Colonic mucosa (tissue), 4 donors: ENCODE measurements at regions of chr11 and their contacts with region 1.

Region 1: DNA sequence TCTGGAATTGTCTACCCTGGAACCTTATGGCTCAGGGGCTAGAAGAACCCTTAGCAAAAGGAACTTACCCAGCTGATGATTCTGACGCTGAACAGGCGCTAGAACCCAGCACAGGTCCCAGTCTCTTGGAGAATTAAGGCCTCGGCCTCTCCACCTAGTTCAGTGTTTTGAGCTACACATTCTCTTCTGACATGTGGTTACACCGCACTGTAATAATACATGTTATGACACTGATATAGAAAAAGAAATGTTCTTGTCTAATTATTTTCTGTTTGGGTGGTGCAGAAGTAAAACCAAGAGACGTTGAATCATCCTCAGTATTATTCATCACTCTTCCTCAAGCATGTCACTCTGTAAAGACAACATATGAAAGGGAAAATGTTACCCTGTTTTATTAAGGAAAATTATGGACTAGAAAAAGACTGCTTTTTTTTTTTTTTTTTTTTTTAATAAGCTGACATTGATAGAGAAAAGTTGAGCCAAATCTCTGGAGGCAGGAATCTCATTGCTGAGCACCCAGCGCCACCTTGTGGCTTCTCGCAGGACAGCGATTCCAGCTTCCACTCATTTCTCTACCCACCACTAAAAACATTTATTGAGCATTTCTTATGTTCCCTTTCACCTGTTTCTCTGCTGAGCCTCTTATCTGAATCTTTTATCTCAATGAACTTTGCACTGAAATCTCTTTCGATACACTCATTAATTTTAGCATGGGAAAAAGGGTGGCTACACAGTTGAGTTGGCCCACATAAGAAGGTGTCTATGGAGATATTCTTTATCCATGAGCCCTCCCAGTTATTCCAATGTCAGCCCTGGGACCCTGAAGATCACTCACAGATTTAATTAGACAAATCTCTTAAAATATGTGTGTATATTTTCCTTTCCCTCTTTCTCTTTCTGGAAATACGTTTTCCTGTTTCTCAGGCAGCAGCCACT is 12.6 kb upstream of the APLNR start:
- DNase-seq: peak; percentile 78
- H3K4me3 ChIP-seq: no peak overlapping the region
- H3K27ac ChIP-seq: no peak overlapping the region
- H3K4me1 ChIP-seq: peaks cover 4% of the 10 kb centered on the region
- H3K27me3 ChIP-seq: no peaks in the 10 kb centered on the region
- CTCF ChIP-seq: peak; percentile 86

Region 2: DNA sequence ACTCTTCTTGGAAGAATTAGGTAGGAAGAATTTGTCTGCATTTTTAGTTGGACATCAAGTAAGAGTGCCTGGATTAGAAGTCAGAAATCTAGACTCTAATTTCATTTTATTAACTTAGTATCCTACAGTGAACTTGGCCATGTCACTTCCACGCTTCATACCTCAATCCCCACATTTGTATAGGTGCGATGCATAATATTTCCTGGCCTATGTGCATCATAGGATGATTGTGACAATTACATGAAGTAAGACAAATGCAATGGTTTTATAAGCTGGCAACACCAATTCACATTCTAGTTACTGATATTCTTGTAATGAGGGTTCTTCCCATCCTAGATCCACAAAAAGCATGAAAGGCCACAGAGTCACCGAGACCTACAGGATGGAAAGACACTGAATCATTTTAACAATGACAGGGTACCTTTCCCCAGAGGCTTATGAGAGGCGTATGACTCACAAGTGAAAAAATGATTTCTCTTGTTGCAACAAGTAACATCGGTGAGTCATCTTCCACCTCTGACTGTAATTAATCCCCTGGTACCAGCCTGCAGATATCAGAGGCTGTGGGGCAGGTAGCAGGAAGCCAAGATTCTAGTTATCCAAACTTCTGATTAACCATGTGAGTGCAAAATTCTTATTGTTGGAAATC is 317.0 kb before region 1 on chr11:
- intact Hi-C with region 1: no loop called
- DNase-seq: no peak
- H3K4me3 ChIP-seq: no peak overlapping the region
- H3K27ac ChIP-seq: no peak overlapping the region
- H3K4me1 ChIP-seq: no peaks in the 10 kb centered on the region
- H3K27me3 ChIP-seq: no peaks in the 10 kb centered on the region
- CTCF ChIP-seq: no peak

Region 3: GRCh38 chr11:57116654-57117053 is 133.0 kb before region 1 on chr11:
- intact Hi-C with region 1: loop called (anchors 5 kb)
- DNase-seq: peak; percentile 41
- H3K4me3 ChIP-seq: no peak overlapping the region
- H3K27ac ChIP-seq: no peak overlapping the region
- H3K4me1 ChIP-seq: no peaks in the 10 kb centered on the region
- H3K27me3 ChIP-seq: no peaks in the 10 kb centered on the region
- CTCF ChIP-seq: peak; percentile 38

Region 4: DNA sequence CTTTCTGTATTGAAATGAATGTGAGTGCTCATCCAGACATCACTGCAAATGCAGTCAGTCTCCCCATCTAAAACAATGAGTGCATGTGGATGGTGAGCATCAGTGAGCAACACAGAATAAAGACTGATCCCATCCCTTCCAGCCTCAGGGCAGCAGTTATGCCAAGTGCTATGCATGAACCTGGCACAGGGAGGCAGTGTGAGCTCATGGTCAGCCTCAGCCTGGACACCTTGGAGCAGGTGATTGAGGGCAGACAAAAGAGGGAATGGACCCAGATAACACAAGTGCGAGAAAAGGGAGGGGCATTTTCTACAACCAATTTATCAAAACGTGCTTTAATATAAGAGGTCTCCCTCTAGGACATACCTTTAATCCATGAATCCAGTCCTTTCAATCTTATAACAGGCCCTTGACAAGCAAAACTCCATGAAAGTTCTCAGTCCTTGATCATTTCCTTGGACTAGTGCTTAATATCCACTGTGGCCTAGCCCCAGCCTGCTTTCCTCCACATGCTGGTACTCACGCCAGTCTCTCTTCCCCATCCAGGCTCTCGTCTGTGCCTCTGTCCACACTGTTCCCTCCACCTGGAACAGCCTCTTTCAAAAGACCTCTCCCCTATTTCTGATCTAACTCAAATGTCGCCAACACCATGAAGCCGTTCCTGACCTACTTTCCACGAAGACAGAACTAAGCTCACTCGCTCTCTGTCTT is 118.4 kb before region 1 on chr11:
- intact Hi-C with region 1: loop called (anchors 2 kb)
- DNase-seq: peak; percentile 32
- H3K4me3 ChIP-seq: no peak overlapping the region
- H3K27ac ChIP-seq: no peak overlapping the region
- H3K4me1 ChIP-seq: no peaks in the 10 kb centered on the region
- H3K27me3 ChIP-seq: no peaks in the 10 kb centered on the region
- CTCF ChIP-seq: peak; percentile 42

Region 5: GRCh38 chr11:57167125-57167846 is 82.4 kb before region 1 on chr11:
- intact Hi-C with region 1: no loop called
- DNase-seq: no peak
- H3K4me3 ChIP-seq: no peak overlapping the region
- H3K27ac ChIP-seq: no peak overlapping the region
- H3K4me1 ChIP-seq: no peaks in the 10 kb centered on the region
- H3K27me3 ChIP-seq: no peaks in the 10 kb centered on the region
- CTCF ChIP-seq: no peak

Region 6: GRCh38 chr11:57426929-57427726 is 177.5 kb after region 1 on chr11 and contains the start of gene SLC43A3:
- intact Hi-C with region 1: no loop called
- DNase-seq: peak; percentile 76
- H3K4me3 ChIP-seq: peak within 1 kb of the TSS; percentile 47
- H3K27ac ChIP-seq: peak within 1 kb of the TSS; percentile 73
- H3K4me1 ChIP-seq: peaks cover 14% of the 10 kb centered on the region
- H3K27me3 ChIP-seq: no peaks in the 10 kb centered on the region
- CTCF ChIP-seq: no peak
- total RNA-seq, gene SLC43A3: 10.6 to 21.4 TPM